Right ventricle myocardium inferior (tissue), 1 donor: ENCODE measurements at regions of chr1 and their contacts with region 1.

Region 1: DNA sequence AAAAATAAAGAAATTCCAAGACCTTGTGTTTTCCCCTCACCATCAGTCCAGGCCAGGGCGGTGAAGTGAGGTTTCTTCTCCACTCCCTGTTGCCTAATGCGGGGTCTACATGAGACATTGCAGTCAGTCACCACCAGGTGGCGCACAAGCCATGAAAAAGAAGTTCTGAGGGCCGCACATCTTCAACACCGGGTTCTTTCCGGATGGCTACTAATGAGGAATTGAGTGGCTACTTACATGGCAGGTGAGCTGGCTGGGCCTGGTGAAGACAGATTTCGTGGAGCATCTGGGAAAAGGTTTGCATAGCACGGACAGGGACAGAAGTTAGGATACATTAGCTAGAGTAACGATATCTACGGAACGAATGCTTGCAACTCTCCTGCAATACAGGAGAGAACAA is 15.8 kb upstream of the S100A11 start:
- DNase-seq: peak; percentile 88
- ATAC-seq: peak; percentile 35

Region 2: GRCh38 chr1:152110860-152111514 is 58.4 kb after region 1 on chr1:
- intact Hi-C with region 1: no loop called
- DNase-seq: peak; percentile 60
- ATAC-seq: peak; percentile 39

Region 3: DNA sequence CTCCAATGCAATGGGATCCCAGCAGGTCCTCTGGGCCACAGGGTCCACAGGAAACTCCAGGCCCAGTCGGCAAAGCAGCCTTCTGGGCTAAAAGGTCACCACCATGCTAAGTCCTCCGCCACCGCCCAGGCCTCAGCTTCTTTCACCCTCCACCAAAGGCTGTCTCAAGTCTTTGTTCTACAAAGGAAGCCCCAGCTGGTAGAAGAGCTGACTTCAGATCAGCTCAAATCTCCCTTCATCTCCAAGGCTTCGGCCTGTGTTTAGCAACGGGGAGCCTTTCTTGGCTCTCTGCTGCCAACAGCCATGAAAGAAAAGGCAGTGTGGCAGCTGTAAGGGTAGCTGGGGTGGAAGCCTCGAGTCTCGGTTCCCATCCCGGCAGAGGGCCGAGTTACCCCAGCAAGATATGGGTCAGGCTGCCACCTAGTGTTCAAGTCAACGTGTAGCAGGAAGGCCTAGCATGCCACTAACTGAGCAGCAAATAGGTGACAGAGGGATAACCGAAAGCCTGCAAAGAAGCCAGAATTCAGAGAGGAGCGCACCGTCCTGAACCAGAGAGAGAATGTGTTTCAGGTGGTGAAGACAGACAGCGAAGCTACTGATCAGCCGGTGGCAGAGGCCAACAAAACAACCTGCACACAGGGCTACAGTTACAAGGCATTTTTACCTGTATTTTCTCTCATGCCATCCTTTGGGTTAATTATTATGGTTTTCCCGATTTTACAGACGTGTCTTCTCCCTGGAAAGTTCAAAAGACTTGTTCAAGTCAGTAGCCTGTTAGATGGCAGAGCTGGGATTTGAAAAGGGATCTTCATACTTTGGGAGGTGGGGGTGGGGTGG is 388.2 kb after region 1 on chr1:
- intact Hi-C with region 1: loop called (anchors 5 kb)
- DNase-seq: peak; percentile 80
- ATAC-seq: peak; percentile 78